CD8-positive, alpha-beta T cell (primary cell): ENCODE measurements at regions of chr13 and their contacts with region 1.

Region 1: GRCh38 chr13:29679396-29680053 is 84.0 kb upstream of the SLC7A1 start:
- DNase-seq: no peak
- ATAC-seq: no peak
- H3K4me3 ChIP-seq: no peak overlapping the region
- H3K4me3 Mint-ChIP-seq: no peak overlapping the region
- H3K27ac ChIP-seq: no peak overlapping the region
- H3K27ac Mint-ChIP-seq: no peak overlapping the region
- H3K4me1 ChIP-seq: no peaks in the 10 kb centered on the region
- H3K4me1 Mint-ChIP-seq: no peaks in the 10 kb centered on the region
- H3K27me3 ChIP-seq: no peaks in the 10 kb centered on the region
- H3K27me3 Mint-ChIP-seq: peaks cover 12% of the 10 kb centered on the region
- CTCF ChIP-seq: no peak

Region 2: GRCh38 chr13:29733147-29733611 is 53.7 kb after region 1 on chr13:
- CTCF ChIA-PET with region 1: no interaction called
- POLR2A ChIA-PET with region 1: no interaction called
- intact Hi-C with region 1: loop called in 1 of 2 experiments (anchors 5 kb)
- DNase-seq: no peak
- ATAC-seq: no peak
- H3K4me3 ChIP-seq: no peak overlapping the region
- H3K4me3 Mint-ChIP-seq: no peak overlapping the region
- H3K27ac ChIP-seq: no peak overlapping the region
- H3K27ac Mint-ChIP-seq: no peak overlapping the region
- H3K4me1 ChIP-seq: no peaks in the 10 kb centered on the region
- H3K4me1 Mint-ChIP-seq: peaks cover 8% of the 10 kb centered on the region
- H3K27me3 ChIP-seq: no peaks in the 10 kb centered on the region
- H3K27me3 Mint-ChIP-seq: peaks cover 49% of the 10 kb centered on the region
- CTCF ChIP-seq: no peak

Region 3: GRCh38 chr13:29830000-29830399 is 150.5 kb after region 1 on chr13:
- CTCF ChIA-PET with region 1: no interaction called
- POLR2A ChIA-PET with region 1: no interaction called
- intact Hi-C with region 1: no loop called
- DNase-seq: no peak
- ATAC-seq: no peak
- H3K4me3 ChIP-seq: no peak overlapping the region
- H3K4me3 Mint-ChIP-seq: no peak overlapping the region
- H3K27ac ChIP-seq: no peak overlapping the region
- H3K27ac Mint-ChIP-seq: no peak overlapping the region
- H3K4me1 ChIP-seq: no peaks in the 10 kb centered on the region
- H3K4me1 Mint-ChIP-seq: peaks cover 32% of the 10 kb centered on the region
- H3K27me3 ChIP-seq: no peaks in the 10 kb centered on the region
- H3K27me3 Mint-ChIP-seq: no peaks in the 10 kb centered on the region
- CTCF ChIP-seq: no peak